A549 (cell line): ENCODE measurements at regions of chr2 and their contacts with region 1.

Region 1: GRCh38 chr2:138104071-138104470 is 139.8 kb downstream of the HNMT start:
- DNase-seq: no peak
- ATAC-seq: no peak
- H3K4me3 ChIP-seq: no peak overlapping the region
- H3K27ac ChIP-seq: no peak overlapping the region
- H3K4me1 ChIP-seq: peaks cover 17% of the 10 kb centered on the region
- CTCF ChIP-seq: no peak
- EP300 ChIP-seq: no peak
- POLR2A ChIP-seq: no peak
- RAD21 ChIP-seq: no peak

Region 2: DNA sequence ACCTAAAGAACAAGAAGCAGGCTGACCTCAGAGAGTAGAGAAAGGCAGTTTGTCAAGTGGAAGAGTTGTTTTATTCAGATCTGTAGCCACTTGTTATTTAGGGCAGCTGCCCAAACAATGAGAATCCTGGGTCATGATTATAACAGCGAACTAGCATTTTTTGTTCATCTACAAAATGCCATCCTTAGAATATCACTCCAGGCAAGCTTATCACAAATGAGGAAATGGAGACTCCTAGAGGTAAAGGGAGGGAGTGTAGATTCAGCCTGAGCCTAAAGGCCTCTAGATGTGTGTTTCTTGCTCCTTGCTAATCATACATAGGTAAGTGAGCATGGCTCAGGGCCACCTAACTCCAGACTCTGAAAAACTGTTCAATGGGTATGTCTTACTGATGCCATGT is 13.7 kb before region 1 on chr2:
- CTCF ChIA-PET with region 1: interaction called, 10 read pairs
- POLR2A ChIA-PET with region 1: no interaction called
- DNase-seq: peak in 1 of 2 experiments; percentile 47
- ATAC-seq: peak; percentile 59 to 89; a peak in 3 of 6 replicates
- H3K4me3 ChIP-seq: no peak overlapping the region
- H3K27ac ChIP-seq: no peak overlapping the region
- H3K4me1 ChIP-seq: peaks cover 21% of the 10 kb centered on the region; the same call in 2 of the 3 replicates
- CTCF ChIP-seq: peak; percentile 26; the same call in 2 of the 3 replicates
- EP300 ChIP-seq: no peak
- POLR2A ChIP-seq: no peak
- RAD21 ChIP-seq: peak; percentile 46 to 62